ENCODE measurements at regions of chr6 and their contacts with region 1.

Region 1: GRCh38 chr6:69647726-69648125 is 149.1 kb downstream of the LMBRD1 start:
- DNase-seq: no peak
- H3K4me3 ChIP-seq: no peak overlapping the region
- H3K27ac ChIP-seq: no peak overlapping the region
- H3K4me1 ChIP-seq: no peaks in the 10 kb centered on the region
- H3K27me3 ChIP-seq: no peaks in the 10 kb centered on the region
- CTCF ChIP-seq: no peak
- EP300 ChIP-seq: no peak
- POLR2A ChIP-seq: no peak

Region 2: DNA sequence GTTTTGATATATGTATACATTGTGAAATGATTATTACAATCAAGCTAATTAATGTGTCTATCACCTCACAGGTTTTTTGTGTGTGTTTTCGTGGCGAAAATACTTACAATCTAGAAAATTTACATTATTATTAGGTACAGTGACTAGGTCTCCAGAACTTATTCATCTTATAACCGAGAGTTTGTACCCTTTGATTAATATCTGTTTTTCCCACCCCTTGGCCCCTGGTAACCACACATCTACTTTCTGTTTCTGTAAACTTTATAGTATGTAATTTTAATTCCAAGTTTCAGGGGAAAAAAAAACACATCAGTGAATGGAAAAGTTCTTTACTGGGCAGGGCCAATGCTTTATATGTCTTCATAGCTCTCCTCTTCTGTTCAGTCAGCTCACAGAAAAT is 17.7 kb after region 1 on chr6:
- in situ Hi-C with region 1: no loop called
- intact Hi-C with region 1: loop called (anchors 2 kb)
- DNase-seq: no peak
- H3K4me3 ChIP-seq: no peak overlapping the region
- H3K27ac ChIP-seq: no peak overlapping the region
- H3K4me1 ChIP-seq: no peaks in the 10 kb centered on the region
- H3K27me3 ChIP-seq: no peaks in the 10 kb centered on the region
- CTCF ChIP-seq: no peak
- EP300 ChIP-seq: no peak
- POLR2A ChIP-seq: no peak

Measured in transverse colon (tissue), 4 donors.